Mammary epithelial cell (primary cell): ENCODE measurements at regions of chr15 and their contacts with region 1.

Region 1: DNA sequence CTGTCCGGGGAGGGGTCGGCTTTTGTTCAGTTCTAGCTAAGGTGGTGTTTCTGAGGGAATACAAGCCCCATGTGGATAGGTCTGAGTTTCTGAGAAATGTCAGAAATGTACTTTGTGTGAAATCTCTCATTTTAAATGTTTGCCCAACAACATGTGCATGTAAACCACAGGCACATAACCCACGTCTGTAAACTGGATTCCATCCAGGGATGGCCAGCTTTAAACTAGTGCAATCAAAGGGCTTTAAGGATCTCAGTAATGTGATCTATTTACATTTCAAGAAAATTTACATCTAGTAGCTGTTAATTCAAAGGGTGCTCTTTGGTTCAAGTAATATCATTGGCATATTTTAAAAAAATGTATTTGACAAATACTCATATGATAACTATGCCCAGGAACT is 52.0 kb downstream of the POLR2M start:
- DNase-seq: no peak
- H3K4me3 ChIP-seq: no peak overlapping the region
- H3K27ac ChIP-seq: no peak overlapping the region
- H3K4me1 ChIP-seq: no peaks in the 10 kb centered on the region
- H3K27me3 ChIP-seq: no peaks in the 10 kb centered on the region
- CTCF ChIP-seq: no peak

Region 2: DNA sequence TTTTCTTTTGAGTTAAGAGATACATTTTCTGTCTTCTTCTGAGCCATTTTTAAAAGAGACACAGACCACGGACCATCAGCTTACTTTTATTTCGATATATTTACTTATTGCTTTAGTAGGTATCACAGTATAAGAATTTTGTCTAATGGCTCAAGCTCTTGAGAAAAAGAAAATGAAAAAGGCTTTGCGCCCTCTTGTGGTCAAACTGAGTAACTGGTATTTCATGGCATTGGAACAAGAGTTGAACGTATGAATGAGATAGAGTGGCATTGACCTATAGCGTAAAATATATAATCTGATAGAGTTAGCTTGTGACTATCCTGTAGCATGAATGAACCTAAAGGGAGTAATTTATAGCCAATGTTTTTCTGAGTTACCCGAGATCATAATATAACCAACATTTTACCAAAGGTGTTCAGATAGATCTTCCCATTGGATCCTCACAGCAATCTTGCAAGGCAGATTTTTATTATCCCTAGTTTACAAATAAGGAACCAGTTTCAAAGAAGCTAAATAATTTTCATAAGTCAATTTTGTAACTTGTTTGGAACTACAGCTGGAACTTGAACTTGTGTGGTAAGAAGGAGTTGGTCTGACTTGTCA is 102.6 kb after region 1 on chr15:
- CTCF ChIA-PET with region 1: no interaction called
- dilution Hi-C with region 1: no loop called
- in situ Hi-C with region 1: loop called (anchors 5 kb)
- intact Hi-C with region 1: no loop called
- DNase-seq: peak; percentile 61
- H3K4me3 ChIP-seq: no peak overlapping the region
- H3K27ac ChIP-seq: no peak overlapping the region
- H3K4me1 ChIP-seq: peaks cover 8% of the 10 kb centered on the region
- H3K27me3 ChIP-seq: no peaks in the 10 kb centered on the region
- CTCF ChIP-seq: peak; percentile 66 to 75